ENCODE measurements at regions of chr7 and their contacts with region 1.

Region 1: DNA sequence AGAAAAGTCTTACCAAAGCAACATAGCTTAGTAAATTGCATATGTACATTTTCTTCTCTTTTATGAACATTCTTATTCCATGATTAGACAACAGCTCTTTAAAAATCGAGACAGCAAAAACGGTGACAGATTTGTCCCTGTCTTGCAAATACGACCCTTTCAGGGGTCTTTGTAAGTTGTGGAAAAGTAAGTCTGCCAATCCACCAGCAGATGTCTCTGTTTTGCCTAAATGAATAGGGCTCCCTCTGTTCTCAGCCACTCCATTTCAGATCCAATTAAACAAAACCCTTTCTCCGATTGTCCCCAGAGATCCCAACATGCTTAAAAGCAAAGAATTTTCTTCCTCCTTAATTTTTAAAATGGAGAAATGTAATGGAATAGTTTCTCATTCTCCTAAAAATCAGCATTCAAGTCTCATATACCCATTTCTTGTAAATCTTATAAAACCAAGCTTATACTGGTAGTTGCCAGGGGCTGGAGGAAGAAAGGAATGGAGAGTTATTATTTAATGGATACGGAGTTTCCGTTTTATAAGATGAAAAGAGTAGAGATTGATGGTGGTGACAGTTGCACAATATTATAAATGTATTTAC is 61.0 kb upstream of the NFE2L3 start:
- DNase-seq: peak in 2 of 9 experiments; percentile 59 to 73
- ATAC-seq: peak; percentile 61
- H3K4me3 ChIP-seq: no peak overlapping the region
- H3K4me3 Mint-ChIP-seq: no peak overlapping the region
- H3K27ac ChIP-seq: no peak overlapping the region
- H3K27ac Mint-ChIP-seq: no peak overlapping the region
- H3K4me1 ChIP-seq: peaks cover 6% of the 10 kb centered on the region
- H3K4me1 Mint-ChIP-seq: peaks cover 16% of the 10 kb centered on the region
- H3K27me3 ChIP-seq: no peaks in the 10 kb centered on the region
- H3K27me3 Mint-ChIP-seq: no peaks in the 10 kb centered on the region
- CTCF ChIP-seq: peak; percentile 70

Region 2: DNA sequence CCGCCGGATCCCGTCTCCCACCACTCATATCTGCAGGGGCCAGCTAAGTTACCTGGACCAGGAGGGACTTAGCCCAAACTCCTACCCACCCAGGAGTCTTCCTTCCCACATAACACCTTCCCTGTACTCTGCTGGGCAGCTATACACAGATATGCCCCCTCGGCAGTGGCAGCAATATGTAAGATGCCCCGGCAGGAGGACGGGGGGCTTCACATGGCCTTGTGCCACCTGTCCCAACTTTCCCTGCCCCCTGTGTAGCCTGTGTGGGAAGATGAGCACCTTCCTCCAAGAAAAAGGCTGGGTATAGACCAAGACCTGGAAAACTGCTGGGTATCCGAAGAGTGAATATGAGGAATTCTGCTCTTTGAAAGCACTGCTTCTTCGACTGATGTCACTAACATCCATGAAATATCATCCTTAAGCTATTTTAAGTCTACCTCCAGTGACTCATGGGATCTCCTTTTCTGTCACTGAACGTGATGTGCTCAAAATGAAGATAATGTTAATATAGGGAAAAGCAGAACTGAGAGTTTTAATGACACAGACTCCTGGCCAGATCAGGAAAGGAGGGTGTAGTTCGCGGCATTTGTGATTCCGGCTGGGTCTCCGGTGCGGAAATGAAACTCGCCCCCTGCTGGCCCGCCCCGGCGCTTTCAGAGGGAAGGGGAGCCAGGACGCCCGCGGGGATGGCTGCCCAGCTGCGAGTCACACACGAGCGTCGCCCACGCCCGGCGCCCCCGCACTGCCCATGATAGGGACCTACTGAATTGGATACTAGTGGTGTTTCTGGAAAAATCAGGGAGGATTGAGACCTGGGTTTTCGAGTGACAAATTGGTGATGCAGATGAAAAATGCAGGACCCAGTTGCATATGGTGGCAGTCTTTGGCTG is 195.9 kb before region 1 on chr7:
- CTCF ChIA-PET with region 1: interaction called, 48 read pairs
- POLR2A ChIA-PET with region 1: interaction called, 3 read pairs
- intact Hi-C with region 1: no loop called
- DNase-seq: peak; percentile 41 to 80 (median 63)
- ATAC-seq: peak; percentile 41
- H3K4me3 ChIP-seq: peak overlapping the region in 1 of 2 experiments; percentile 12
- H3K4me3 Mint-ChIP-seq: peak overlapping the region; percentile 35
- H3K27ac ChIP-seq: no peak overlapping the region
- H3K27ac Mint-ChIP-seq: no peak overlapping the region
- H3K4me1 ChIP-seq: peaks cover 14% of the 10 kb centered on the region
- H3K4me1 Mint-ChIP-seq: peaks cover 21% of the 10 kb centered on the region
- H3K27me3 ChIP-seq: no peaks in the 10 kb centered on the region
- H3K27me3 Mint-ChIP-seq: peaks cover under 1% of the 10 kb centered on the region
- CTCF ChIP-seq: peak; percentile 45

Region 3: GRCh38 chr7:25930492-25931048 is 160.5 kb before region 1 on chr7:
- CTCF ChIA-PET with region 1: no interaction called
- POLR2A ChIA-PET with region 1: no interaction called
- intact Hi-C with region 1: no loop called
- DNase-seq: no peak
- ATAC-seq: no peak
- H3K4me3 ChIP-seq: no peak overlapping the region
- H3K4me3 Mint-ChIP-seq: no peak overlapping the region
- H3K27ac ChIP-seq: no peak overlapping the region
- H3K27ac Mint-ChIP-seq: no peak overlapping the region
- H3K4me1 ChIP-seq: no peaks in the 10 kb centered on the region
- H3K4me1 Mint-ChIP-seq: no peaks in the 10 kb centered on the region
- H3K27me3 ChIP-seq: peaks cover 0 to 4% of the 10 kb centered on the region in 2 experiments
- H3K27me3 Mint-ChIP-seq: peaks cover 27% of the 10 kb centered on the region
- CTCF ChIP-seq: no peak

Region 4: DNA sequence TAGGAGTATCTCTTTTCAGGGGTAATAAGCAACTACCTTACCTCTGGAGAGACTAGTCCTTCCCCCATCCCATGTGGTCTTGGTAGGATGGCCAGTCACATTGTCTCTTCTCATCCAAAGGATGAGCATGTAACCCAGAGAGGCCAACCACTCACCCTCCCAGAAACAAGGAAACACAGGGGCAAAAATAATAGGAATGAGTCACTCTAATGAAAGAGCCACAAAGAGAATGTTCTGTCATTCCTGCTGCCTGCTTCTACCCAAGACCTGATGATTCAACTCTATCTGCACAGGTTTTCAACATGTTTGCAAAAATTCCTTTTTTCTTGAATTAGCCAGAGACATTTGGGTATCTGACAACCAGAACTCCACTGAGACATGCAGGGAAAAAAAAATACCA is 38.3 kb before region 1 on chr7:
- CTCF ChIA-PET with region 1: no interaction called
- POLR2A ChIA-PET with region 1: no interaction called
- intact Hi-C with region 1: no loop called
- DNase-seq: no peak
- ATAC-seq: no peak
- H3K4me3 ChIP-seq: no peak overlapping the region
- H3K4me3 Mint-ChIP-seq: no peak overlapping the region
- H3K27ac ChIP-seq: no peak overlapping the region
- H3K27ac Mint-ChIP-seq: no peak overlapping the region
- H3K4me1 ChIP-seq: no peaks in the 10 kb centered on the region
- H3K4me1 Mint-ChIP-seq: no peaks in the 10 kb centered on the region
- H3K27me3 ChIP-seq: peaks cover 0 to 2% of the 10 kb centered on the region in 2 experiments
- H3K27me3 Mint-ChIP-seq: peaks cover 21% of the 10 kb centered on the region
- CTCF ChIP-seq: no peak

Region 5: DNA sequence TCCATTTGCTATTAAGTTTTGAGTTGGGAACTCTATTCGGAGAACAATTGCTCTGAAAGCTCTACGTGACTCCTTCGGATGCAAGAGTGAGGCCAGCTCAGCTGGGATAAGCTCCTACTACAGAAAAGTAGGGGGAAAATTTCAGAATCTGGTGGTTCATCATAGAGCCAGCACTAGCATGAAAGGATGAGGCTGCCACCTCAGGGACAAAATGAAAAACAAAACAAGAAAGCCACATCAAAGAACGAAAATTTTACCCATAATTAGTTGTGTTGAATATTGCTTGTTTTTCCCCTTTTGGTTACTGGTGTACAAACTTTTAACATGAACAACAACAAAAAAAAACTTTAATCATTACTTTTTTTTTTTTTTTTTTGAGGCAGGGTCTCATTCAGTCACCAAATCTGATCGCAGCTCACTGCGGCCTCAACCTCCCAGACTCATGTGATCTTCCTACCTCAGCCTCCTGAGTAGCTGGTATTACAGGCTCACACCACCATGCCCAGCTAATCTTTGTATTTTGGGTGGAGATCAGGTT is 21.2 kb after region 1 on chr7:
- CTCF ChIA-PET with region 1: interaction called, 48 read pairs
- POLR2A ChIA-PET with region 1: interaction called, 3 read pairs
- intact Hi-C with region 1: loop called in 1 of 2 experiments (anchors 1 kb)
- DNase-seq: peak in 2 of 9 experiments; percentile 15 to 46
- ATAC-seq: no peak
- H3K4me3 ChIP-seq: no peak overlapping the region
- H3K4me3 Mint-ChIP-seq: no peak overlapping the region
- H3K27ac ChIP-seq: no peak overlapping the region
- H3K27ac Mint-ChIP-seq: no peak overlapping the region
- H3K4me1 ChIP-seq: no peaks in the 10 kb centered on the region
- H3K4me1 Mint-ChIP-seq: peaks cover 5% of the 10 kb centered on the region
- H3K27me3 ChIP-seq: no peaks in the 10 kb centered on the region
- H3K27me3 Mint-ChIP-seq: no peaks in the 10 kb centered on the region
- CTCF ChIP-seq: no peak

Region 6: GRCh38 chr7:26151953-26152781 is 61.1 kb after region 1 on chr7 and contains the start of gene NFE2L3:
- CTCF ChIA-PET with region 1: interaction called, 17 read pairs
- POLR2A ChIA-PET with region 1: interaction called, 6 read pairs
- intact Hi-C with region 1: loop called in 1 of 2 experiments (anchors 2 kb)
- DNase-seq: peak; percentile 64 to 90 (median 77)
- ATAC-seq: peak; percentile 81
- H3K4me3 ChIP-seq: peak within 1 kb of the TSS; percentile 70 to 91
- H3K4me3 Mint-ChIP-seq: peak within 1 kb of the TSS; percentile 87
- H3K27ac ChIP-seq: peak within 1 kb of the TSS in 1 of 2 experiments; percentile 75
- H3K27ac Mint-ChIP-seq: peak within 1 kb of the TSS; percentile 73
- H3K4me1 ChIP-seq: peaks cover 39% of the 10 kb centered on the region
- H3K4me1 Mint-ChIP-seq: peaks cover 50% of the 10 kb centered on the region
- H3K27me3 ChIP-seq: no peaks in the 10 kb centered on the region
- H3K27me3 Mint-ChIP-seq: no peaks in the 10 kb centered on the region
- CTCF ChIP-seq: no peak
- total RNA-seq, gene NFE2L3: 0.43 to 0.50 TPM

Region 7: GRCh38 chr7:26187380-26188205 is 96.6 kb after region 1 on chr7:
- CTCF ChIA-PET with region 1: interaction called, 239 read pairs
- POLR2A ChIA-PET with region 1: interaction called, 13 read pairs
- intact Hi-C with region 1: no loop called
- DNase-seq: peak in 1 of 9 experiments; percentile 38
- ATAC-seq: peak; percentile 9
- H3K4me3 ChIP-seq: no peak overlapping the region
- H3K4me3 Mint-ChIP-seq: no peak overlapping the region
- H3K27ac ChIP-seq: peak overlapping the region in 1 of 2 experiments; percentile 14
- H3K27ac Mint-ChIP-seq: peak overlapping the region; percentile 76
- H3K4me1 ChIP-seq: peaks cover 43% of the 10 kb centered on the region
- H3K4me1 Mint-ChIP-seq: peaks cover 79% of the 10 kb centered on the region
- H3K27me3 ChIP-seq: no peaks in the 10 kb centered on the region
- H3K27me3 Mint-ChIP-seq: no peaks in the 10 kb centered on the region
- CTCF ChIP-seq: no peak

Region 8: GRCh38 chr7:26291699-26292538 is 200.9 kb after region 1 on chr7 and contains the start of gene SNX10:
- CTCF ChIA-PET with region 1: interaction called, 12 read pairs
- POLR2A ChIA-PET with region 1: no interaction called
- intact Hi-C with region 1: no loop called
- DNase-seq: peak; percentile 45 to 91 (median 72)
- ATAC-seq: peak; percentile 79
- H3K4me3 ChIP-seq: peak within 1 kb of the TSS; percentile 70 to 94
- H3K4me3 Mint-ChIP-seq: peak within 1 kb of the TSS; percentile 91
- H3K27ac ChIP-seq: peak within 1 kb of the TSS; percentile 43 to 78
- H3K27ac Mint-ChIP-seq: peak within 1 kb of the TSS; percentile 85
- H3K4me1 ChIP-seq: peaks cover 32% of the 10 kb centered on the region
- H3K4me1 Mint-ChIP-seq: peaks cover 38% of the 10 kb centered on the region
- H3K27me3 ChIP-seq: no peaks in the 10 kb centered on the region
- H3K27me3 Mint-ChIP-seq: no peaks in the 10 kb centered on the region
- CTCF ChIP-seq: no peak
- total RNA-seq, gene SNX10: 3.9 to 7.0 TPM

Region 9: DNA sequence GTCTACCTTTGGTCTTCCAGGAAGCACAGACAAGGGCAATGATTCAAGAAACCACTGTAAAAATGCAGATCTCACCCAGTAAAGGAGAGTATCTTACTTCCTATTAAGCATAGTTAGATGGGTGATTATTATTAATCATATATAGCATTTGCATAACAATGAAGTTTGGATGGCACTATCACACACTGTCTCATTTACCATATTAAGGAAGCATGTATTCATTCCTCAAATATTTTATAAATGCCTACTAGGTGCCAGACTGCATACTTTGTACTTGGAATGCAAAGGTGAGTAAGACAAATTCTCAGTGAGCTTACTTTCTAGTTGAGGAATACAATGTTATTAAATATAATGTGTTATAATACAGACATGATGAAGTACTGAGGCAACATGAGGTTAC is 827.2 kb after region 1 on chr7:
- CTCF ChIA-PET with region 1: no interaction called
- POLR2A ChIA-PET with region 1: no interaction called
- intact Hi-C with region 1: no loop called
- DNase-seq: no peak
- ATAC-seq: no peak
- H3K4me3 ChIP-seq: no peak overlapping the region
- H3K4me3 Mint-ChIP-seq: no peak overlapping the region
- H3K27ac ChIP-seq: no peak overlapping the region
- H3K27ac Mint-ChIP-seq: no peak overlapping the region
- H3K4me1 ChIP-seq: no peaks in the 10 kb centered on the region
- H3K4me1 Mint-ChIP-seq: no peaks in the 10 kb centered on the region
- H3K27me3 ChIP-seq: no peaks in the 10 kb centered on the region
- H3K27me3 Mint-ChIP-seq: peaks cover 8% of the 10 kb centered on the region
- CTCF ChIP-seq: no peak

Region 10: DNA sequence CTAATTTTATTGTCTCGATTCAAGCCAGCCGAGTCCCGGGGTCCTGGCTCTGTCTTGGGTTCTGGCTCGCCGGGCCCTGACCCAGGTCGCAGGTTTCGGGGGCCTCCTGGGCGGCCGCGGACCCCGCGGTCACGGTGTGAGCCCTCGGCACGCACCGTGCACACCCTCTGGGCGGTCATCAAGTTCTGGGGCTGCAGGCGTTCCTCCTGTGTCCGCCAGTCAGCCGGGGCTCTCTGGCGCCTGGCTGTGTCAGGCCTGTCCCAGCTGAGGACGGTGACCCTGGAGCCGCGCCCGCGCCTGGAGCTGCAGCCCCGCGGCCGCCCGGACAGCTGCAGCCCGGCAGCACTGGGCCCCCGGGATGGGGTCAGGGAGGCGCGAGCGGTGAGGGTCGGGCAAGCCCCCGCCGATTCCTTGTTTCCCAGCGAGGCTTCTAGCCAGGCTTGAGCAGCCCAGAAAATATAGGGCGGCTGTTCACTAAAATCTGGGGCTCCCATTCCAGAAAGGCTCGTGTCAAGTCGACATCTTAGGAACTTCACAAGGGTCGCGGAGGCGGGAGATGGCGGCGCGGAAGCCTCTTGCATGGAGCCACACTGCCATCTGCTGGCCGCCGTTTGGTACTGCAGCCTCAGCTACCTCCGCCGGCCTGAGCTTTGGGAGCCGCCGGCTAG is 1069.7 kb after region 1 on chr7:
- CTCF ChIA-PET with region 1: no interaction called
- POLR2A ChIA-PET with region 1: no interaction called
- intact Hi-C with region 1: loop called in 1 of 2 experiments (anchors 10 kb)
- DNase-seq: peak; percentile 70 to 93 (median 87)
- ATAC-seq: peak; percentile 87
- H3K4me3 ChIP-seq: peak overlapping the region; percentile 63 to 79
- H3K4me3 Mint-ChIP-seq: peak overlapping the region; percentile 80
- H3K27ac ChIP-seq: no peak overlapping the region
- H3K27ac Mint-ChIP-seq: no peak overlapping the region
- H3K4me1 ChIP-seq: peaks cover 31% of the 10 kb centered on the region
- H3K4me1 Mint-ChIP-seq: peaks cover 41% of the 10 kb centered on the region
- H3K27me3 ChIP-seq: peaks cover 52 to 70% of the 10 kb centered on the region in 2 experiments
- H3K27me3 Mint-ChIP-seq: peaks cover 77% of the 10 kb centered on the region
- CTCF ChIP-seq: peak; percentile 97

Measured in CD8-positive, alpha-beta T cell (primary cell).